Posterior vena cava (tissue), 2 donors: ENCODE measurements at regions of chr4 and their contacts with region 1.

Region 1: GRCh38 chr4:72128741-72129140 is 96.9 kb downstream of the NPFFR2 start:
- DNase-seq: no peak

Region 2: DNA sequence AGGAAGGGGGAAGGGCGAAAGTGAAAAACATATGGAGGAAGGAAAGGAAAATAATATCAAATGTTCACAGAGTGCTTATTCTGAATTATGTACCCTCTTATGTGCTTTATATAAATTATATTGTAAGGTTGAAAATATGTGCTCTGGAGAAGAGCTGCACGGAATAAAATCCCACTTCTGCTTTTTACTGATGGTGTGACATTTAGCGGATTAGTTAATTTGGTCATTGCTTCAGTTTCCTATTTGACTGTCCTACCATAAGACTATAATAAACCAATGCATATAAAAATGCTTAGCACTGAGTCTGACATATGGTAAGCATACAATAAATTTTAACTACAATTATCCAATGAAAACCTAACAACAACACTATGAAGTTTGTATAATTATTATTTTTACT is 10.7 kb before region 1 on chr4:
- intact Hi-C with region 1: loop called in 1 of 2 experiments (anchors 1 kb)
- DNase-seq: no peak